Posterior vena cava (tissue), 2 donors: ENCODE measurements at regions of chr2 and their contacts with region 1.

Region 1: GRCh38 chr2:205734436-205735037 is 52.2 kb downstream of the NRP2 start:
- DNase-seq: no peak

Region 2: DNA sequence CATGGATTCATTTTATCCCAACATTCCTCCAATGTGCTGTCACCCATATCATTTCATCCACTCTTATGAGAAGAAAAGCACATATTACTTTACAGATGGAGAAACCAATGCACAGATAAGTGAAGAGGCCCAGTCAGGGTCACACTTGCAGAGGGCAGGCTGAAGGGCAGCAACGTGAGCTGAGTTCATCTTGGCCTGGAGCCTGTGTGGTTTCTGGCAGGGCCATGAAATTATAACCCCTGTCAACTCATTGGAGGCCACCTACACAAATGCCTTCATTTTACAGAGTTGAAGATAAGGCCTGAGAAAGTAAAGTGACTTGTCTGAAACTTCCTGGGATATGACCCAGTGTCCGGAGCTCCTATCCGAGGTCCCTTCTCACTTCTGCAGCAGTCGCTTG is 140.6 kb before region 1 on chr2:
- intact Hi-C with region 1: no loop called
- DNase-seq: no peak

Region 3: DNA sequence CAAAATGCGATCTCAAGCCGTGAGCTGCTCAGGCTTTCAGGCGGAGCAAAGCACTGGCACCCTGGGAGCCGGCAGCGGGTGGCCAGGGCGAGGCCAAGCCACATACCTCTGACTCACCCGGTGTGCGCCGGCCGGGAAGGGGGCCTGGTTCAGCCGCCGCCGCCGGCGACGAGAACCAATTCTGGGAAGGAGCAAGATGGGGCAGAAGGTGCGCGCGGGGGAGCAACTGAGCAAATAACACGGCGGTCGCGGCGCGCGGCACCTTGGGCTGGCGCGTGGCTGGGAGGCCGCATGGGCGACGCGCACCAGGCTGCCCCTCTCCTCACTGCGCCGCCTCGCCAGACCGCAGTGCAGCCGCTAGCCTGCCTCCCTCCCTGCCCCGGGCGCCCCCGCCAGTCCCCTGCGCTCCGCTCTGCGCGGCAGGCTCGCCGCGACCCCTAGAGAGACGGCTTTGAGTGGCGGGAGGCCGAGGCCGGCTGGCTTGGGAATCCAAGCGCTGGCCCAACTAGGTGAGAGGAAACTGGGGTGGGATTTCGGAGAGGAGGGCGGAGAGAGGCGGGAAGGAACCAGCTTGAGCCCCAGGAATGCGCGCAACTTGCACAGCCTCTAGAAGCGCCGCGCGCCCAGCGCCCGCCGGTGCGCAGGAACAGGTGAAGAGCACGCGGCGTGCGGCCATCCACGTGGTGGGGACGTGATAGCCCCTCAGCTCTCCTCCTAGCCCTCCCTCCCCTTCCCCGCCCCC is 49.1 kb before region 1 on chr2:
- intact Hi-C with region 1: loop called in 1 of 2 experiments (anchors 5 kb)
- DNase-seq: peak; percentile 82